Naive thymus-derived CD4-positive, alpha-beta T cell (primary cell): ENCODE measurements at regions of chr6 and their contacts with region 1.

Region 1: GRCh38 chr6:144215932-144216667 is 65.8 kb downstream of the STX11 start:
- DNase-seq: peak; percentile 84 to 96 (median 94)
- ATAC-seq: peak; percentile 91
- H3K4me3 ChIP-seq: peak overlapping the region; percentile 73
- H3K4me3 Mint-ChIP-seq: peak overlapping the region; percentile 84 to 99 (median 97)
- H3K27ac ChIP-seq: peak overlapping the region; percentile 86
- H3K27ac Mint-ChIP-seq: peak overlapping the region; percentile 91 to 100 (median 100)
- H3K4me1 ChIP-seq: peaks cover 15 to 18% of the 10 kb centered on the region in 2 donors
- H3K4me1 Mint-ChIP-seq: peaks cover 12 to 48% (median 40%) of the 10 kb centered on the region in 7 donors
- H3K27me3 ChIP-seq: no peaks in the 10 kb centered on the region
- H3K27me3 Mint-ChIP-seq: peaks cover 0 to 12% (median 0%) of the 10 kb centered on the region in 5 donors

Region 2: DNA sequence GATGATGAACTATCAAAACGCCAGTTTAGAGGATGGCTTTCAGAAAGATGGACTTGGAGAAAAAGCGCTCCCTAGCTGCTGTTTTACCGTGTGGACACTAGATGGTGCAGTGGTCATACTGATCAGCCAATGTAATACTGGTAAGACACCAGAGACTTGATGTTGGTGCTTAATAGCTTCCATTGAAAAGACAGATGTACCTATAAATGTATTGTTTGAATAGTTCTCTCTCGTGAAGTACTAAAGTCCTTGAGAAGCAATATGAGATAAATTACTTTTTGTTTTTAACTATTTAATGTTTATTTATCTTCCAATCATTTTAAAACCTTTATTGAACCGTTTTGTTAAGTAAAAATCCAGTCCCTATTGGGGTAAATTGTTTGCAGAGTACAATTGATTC is 640.7 kb before region 1 on chr6:
- CTCF ChIA-PET with region 1: no interaction called
- POLR2A ChIA-PET with region 1: no interaction called
- intact Hi-C with region 1: loop called (anchors 1 to 2 kb)
- DNase-seq: peak in 8 of 9 donors; percentile 34 to 79 (median 67)
- ATAC-seq: peak; percentile 99
- H3K4me3 ChIP-seq: no peak overlapping the region
- H3K4me3 Mint-ChIP-seq: no peak overlapping the region
- H3K27ac ChIP-seq: no peak overlapping the region
- H3K27ac Mint-ChIP-seq: peak overlapping the region in 1 of 9 donors; percentile 15
- H3K4me1 ChIP-seq: no peaks in the 10 kb centered on the region
- H3K4me1 Mint-ChIP-seq: peaks cover 0 to 9% (median 0%) of the 10 kb centered on the region in 7 donors
- H3K27me3 ChIP-seq: no peaks in the 10 kb centered on the region
- H3K27me3 Mint-ChIP-seq: no peaks in the 10 kb centered on the region

Region 3: DNA sequence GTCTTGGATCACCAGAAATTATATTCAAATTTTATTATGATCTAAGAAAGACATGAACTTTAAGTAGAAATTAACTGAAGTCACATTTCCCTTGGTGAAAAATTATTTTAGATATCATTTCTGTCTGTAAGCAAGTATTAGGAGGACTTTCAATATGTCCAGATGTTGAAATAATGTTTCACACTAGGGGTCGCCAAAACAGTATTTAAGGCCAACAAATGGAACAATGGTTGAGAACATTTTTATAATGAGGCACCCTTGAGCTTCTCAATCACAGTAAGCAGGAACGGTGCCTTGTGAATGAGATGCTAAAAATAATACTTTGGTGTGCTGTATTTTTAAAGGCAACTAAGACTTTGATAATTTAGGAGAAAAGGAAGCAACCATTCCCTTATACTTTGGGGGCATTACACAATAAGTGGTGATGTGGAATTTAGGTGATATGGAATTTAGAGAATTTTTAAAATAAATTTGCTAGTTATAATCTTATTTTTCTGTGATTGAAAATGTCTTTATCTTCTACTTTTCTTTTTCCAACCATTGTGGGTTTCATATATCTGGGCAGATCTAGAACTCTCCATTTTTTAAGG is 111.1 kb before region 1 on chr6:
- CTCF ChIA-PET with region 1: interaction called, 5 read pairs
- POLR2A ChIA-PET with region 1: interaction called, 3 read pairs
- intact Hi-C with region 1: loop called (anchors 1 kb)
- DNase-seq: peak in 7 of 9 donors; percentile 30 to 67 (median 61)
- ATAC-seq: peak; percentile 88
- H3K4me3 ChIP-seq: no peak overlapping the region
- H3K4me3 Mint-ChIP-seq: no peak overlapping the region
- H3K27ac ChIP-seq: no peak overlapping the region
- H3K27ac Mint-ChIP-seq: peak overlapping the region in 1 of 9 donors; percentile 29
- H3K4me1 ChIP-seq: no peaks in the 10 kb centered on the region
- H3K4me1 Mint-ChIP-seq: peaks cover 0 to 7% (median 4%) of the 10 kb centered on the region in 7 donors
- H3K27me3 ChIP-seq: no peaks in the 10 kb centered on the region
- H3K27me3 Mint-ChIP-seq: peaks cover 0 to 6% (median 0%) of the 10 kb centered on the region in 5 donors

Region 4: DNA sequence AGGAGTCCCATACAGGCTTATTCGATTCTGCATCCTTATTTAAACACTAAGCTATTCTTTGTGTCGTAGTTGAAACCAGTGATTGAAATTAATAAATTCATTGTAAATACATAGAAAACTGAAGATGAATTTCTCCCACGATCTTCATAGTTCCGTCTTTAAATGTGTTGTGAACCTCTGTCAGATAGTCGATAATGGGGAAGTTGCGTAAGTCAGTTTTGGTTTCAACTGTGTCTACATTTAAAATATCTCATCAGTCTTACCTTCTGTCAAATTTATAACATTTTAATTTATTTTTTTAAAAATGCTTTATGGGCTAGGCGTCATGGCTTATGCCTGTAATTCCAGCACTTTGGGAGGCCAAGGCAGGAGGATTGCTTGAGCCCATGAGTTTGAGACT is 53.1 kb before region 1 on chr6:
- CTCF ChIA-PET with region 1: no interaction called
- POLR2A ChIA-PET with region 1: no interaction called
- intact Hi-C with region 1: no loop called
- DNase-seq: no peak
- ATAC-seq: peak; percentile 55
- H3K4me3 ChIP-seq: no peak overlapping the region
- H3K4me3 Mint-ChIP-seq: no peak overlapping the region
- H3K27ac ChIP-seq: no peak overlapping the region
- H3K27ac Mint-ChIP-seq: no peak overlapping the region
- H3K4me1 ChIP-seq: no peaks in the 10 kb centered on the region
- H3K4me1 Mint-ChIP-seq: peaks cover 0 to 10% (median 0%) of the 10 kb centered on the region in 7 donors
- H3K27me3 ChIP-seq: no peaks in the 10 kb centered on the region
- H3K27me3 Mint-ChIP-seq: no peaks in the 10 kb centered on the region

Region 5: GRCh38 chr6:144334131-144334708 is 118.1 kb after region 1 on chr6:
- CTCF ChIA-PET with region 1: no interaction called
- POLR2A ChIA-PET with region 1: no interaction called
- intact Hi-C with region 1: loop called in 1 of 2 experiments (anchors 1 kb)
- DNase-seq: peak; percentile 24 to 87 (median 83)
- ATAC-seq: peak; percentile 91
- H3K4me3 ChIP-seq: peak overlapping the region; percentile 59
- H3K4me3 Mint-ChIP-seq: peak overlapping the region; percentile 80 to 93 (median 86)
- H3K27ac ChIP-seq: peak overlapping the region; percentile 75
- H3K27ac Mint-ChIP-seq: peak overlapping the region; percentile 87 to 98 (median 96)
- H3K4me1 ChIP-seq: peaks cover 34 to 41% of the 10 kb centered on the region in 2 donors
- H3K4me1 Mint-ChIP-seq: peaks cover 40 to 74% (median 59%) of the 10 kb centered on the region in 7 donors
- H3K27me3 ChIP-seq: no peaks in the 10 kb centered on the region
- H3K27me3 Mint-ChIP-seq: no peaks in the 10 kb centered on the region

Region 6: DNA sequence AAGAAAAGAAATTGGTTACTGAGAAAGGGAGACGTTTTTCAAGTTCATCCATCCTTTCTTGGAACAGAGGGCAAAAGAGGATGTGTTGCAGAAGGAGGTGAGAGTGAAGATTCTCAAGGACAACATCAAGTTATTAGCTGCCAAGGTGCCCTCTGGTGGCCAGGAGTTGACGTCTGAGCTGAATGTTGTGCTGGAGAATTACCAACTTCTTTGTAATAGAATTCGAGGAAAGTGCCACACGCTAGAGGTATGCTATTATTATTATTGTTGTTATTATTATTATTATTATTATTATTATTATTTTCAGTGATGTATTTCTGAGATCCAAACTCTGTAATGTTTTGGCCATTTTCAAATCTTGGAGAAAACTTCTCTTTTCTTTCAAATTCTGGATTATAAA is 266.0 kb after region 1 on chr6:
- CTCF ChIA-PET with region 1: interaction called, 7 read pairs
- POLR2A ChIA-PET with region 1: no interaction called
- intact Hi-C with region 1: loop called (anchors 1 kb)
- DNase-seq: peak; percentile 27 to 67 (median 61)
- ATAC-seq: peak; percentile 77
- H3K4me3 ChIP-seq: no peak overlapping the region
- H3K4me3 Mint-ChIP-seq: no peak overlapping the region
- H3K27ac ChIP-seq: no peak overlapping the region
- H3K27ac Mint-ChIP-seq: peak overlapping the region in 6 of 9 donors; percentile 12 to 88 (median 38)
- H3K4me1 ChIP-seq: no peaks in the 10 kb centered on the region
- H3K4me1 Mint-ChIP-seq: peaks cover 0 to 20% (median 4%) of the 10 kb centered on the region in 7 donors
- H3K27me3 ChIP-seq: no peaks in the 10 kb centered on the region
- H3K27me3 Mint-ChIP-seq: no peaks in the 10 kb centered on the region